ENCODE measurements at regions of chr2 and their contacts with region 1.

Region 1: GRCh38 chr2:133458280-133458679 is 110.0 kb downstream of the NCKAP5 start:
- DNase-seq: no peak

Region 2: GRCh38 chr2:133407046-133407740 is 51.1 kb before region 1 on chr2:
- intact Hi-C with region 1: loop called in 1 of 2 experiments (anchors 2 kb)
- DNase-seq: no peak